Thyroid gland (tissue), 4 donors: ENCODE measurements at regions of chr2 and their contacts with region 1.

Region 1: DNA sequence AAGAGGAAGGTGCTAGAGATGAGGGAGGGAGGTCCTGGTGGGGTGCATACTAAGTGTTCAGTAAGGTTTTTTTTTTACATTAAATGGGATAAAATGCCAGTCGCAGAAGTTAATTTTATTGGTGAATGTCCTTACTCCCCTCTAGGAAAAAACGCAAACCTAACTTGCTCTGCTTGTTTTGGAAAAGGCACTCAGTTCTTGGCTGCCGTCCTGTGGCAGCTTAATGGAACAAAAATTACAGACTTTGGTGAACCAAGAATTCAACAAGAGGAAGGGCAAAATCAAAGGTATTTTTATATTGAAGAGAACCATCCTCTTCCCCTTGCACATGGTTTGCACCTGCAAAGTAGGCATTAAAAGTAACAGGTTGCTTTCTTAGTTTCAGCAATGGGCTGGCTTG is 12.7 kb upstream of the IL18R1 start:
- DNase-seq: peak; percentile 64 to 78
- H3K4me3 ChIP-seq: no peak overlapping the region
- H3K27ac ChIP-seq: peak overlapping the region in 2 of 3 donors; percentile 24 to 26
- H3K4me1 ChIP-seq: peaks cover 0 to 10% of the 10 kb centered on the region in 2 donors
- H3K27me3 ChIP-seq: no peaks in the 10 kb centered on the region
- CTCF ChIP-seq: peak in 4 of 6 experiments; percentile 41 to 54 (median 49)
- POLR2A ChIP-seq: no peak

Region 2: DNA sequence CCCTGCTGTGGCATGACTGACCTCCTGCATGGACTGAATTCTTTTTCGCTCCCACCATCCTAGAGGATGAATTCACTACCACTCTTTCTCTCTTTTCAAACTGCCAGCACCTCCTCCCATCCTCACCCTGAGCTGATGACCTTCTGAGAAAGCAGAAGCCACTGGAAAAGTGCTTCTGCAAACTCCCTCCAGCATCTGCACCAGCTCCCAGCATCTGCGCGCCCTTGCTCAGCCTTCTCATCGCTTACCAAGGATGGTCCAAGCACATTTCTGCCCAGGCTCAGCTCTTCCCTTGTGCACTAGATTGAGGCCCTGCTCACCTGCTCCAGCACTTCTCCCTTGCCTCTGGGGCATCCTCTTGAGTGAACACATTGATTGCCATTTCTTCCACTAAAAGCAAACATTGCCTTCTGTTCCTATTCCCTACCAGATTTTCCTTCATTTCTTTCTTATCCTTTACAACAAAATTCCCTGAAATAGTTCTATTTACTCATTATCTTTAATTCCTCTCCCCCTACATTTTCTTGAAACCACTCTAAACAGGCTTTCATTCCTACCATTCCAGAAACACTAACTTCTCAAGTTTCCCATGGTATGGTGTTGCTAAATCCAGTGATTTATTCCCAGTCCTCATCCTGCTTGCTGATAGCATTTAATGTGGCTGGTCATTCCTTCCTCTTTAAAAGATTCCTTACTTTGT is 74.2 kb before region 1 on chr2:
- intact Hi-C with region 1: loop called (anchors 10 kb)
- DNase-seq: no peak
- H3K4me3 ChIP-seq: no peak overlapping the region
- H3K27ac ChIP-seq: no peak overlapping the region
- H3K4me1 ChIP-seq: no peaks in the 10 kb centered on the region
- H3K27me3 ChIP-seq: no peaks in the 10 kb centered on the region
- CTCF ChIP-seq: no peak
- POLR2A ChIP-seq: no peak